Activated B cell treated with CpG ODN at 0.5 μM for 24 hours (primary cell): ENCODE measurements at regions of chr7 and their contacts with region 1.

Region 1: DNA sequence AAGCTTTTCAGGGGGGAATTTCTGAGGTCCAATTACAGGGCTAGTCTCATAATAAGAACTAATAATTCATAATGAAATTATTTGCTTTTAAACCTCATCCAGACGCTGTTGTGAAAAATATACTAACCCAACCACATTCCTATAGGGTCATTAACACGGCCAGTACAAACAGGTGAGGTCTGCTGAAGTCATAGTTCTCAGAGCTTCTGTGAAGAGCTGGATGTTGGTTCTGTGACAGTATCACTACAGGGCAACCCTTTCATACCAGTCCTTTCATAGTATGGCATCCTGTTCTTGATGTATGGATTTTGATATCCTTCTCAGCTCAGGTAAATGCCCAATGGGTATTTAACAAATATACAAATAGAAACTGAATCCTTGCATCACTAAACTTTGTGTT is 62.3 kb upstream of the FAM133B start:
- DNase-seq: no peak
- ATAC-seq: no peak
- H3K4me3 Mint-ChIP-seq: no peak overlapping the region
- H3K27ac Mint-ChIP-seq: no peak overlapping the region
- H3K4me1 Mint-ChIP-seq: peaks cover 8% of the 10 kb centered on the region
- H3K27me3 Mint-ChIP-seq: no peaks in the 10 kb centered on the region
- CTCF ChIP-seq: no peak

Region 2: GRCh38 chr7:92436612-92437445 is 215.7 kb before region 1 on chr7:
- CTCF ChIA-PET with region 1: no interaction called
- POLR2A ChIA-PET with region 1: no interaction called
- intact Hi-C with region 1: no loop called
- DNase-seq: no peak
- ATAC-seq: no peak
- H3K4me3 Mint-ChIP-seq: no peak overlapping the region
- H3K27ac Mint-ChIP-seq: no peak overlapping the region
- H3K4me1 Mint-ChIP-seq: no peaks in the 10 kb centered on the region
- H3K27me3 Mint-ChIP-seq: peaks cover 6% of the 10 kb centered on the region
- CTCF ChIP-seq: no peak

Region 3: GRCh38 chr7:92641921-92642511 is 10.5 kb before region 1 on chr7:
- CTCF ChIA-PET with region 1: no interaction called
- POLR2A ChIA-PET with region 1: no interaction called
- intact Hi-C with region 1: loop called (anchors 2 kb)
- DNase-seq: no peak
- ATAC-seq: peak; percentile 78
- H3K4me3 Mint-ChIP-seq: peak overlapping the region; percentile 59
- H3K27ac Mint-ChIP-seq: peak overlapping the region; percentile 90
- H3K4me1 Mint-ChIP-seq: peaks cover 48% of the 10 kb centered on the region
- H3K27me3 Mint-ChIP-seq: no peaks in the 10 kb centered on the region
- CTCF ChIP-seq: no peak